ENCODE measurements at regions of chr11 and their contacts with region 1.

Region 1: GRCh38 chr11:95790123-95790932 is at the start of gene CEP57:
- DNase-seq: peak; percentile 98
- H3K4me3 Mint-ChIP-seq: peak within 1 kb of the TSS; percentile 99
- H3K27ac Mint-ChIP-seq: peak within 1 kb of the TSS; percentile 100
- H3K4me1 Mint-ChIP-seq: peaks cover 56% of the 10 kb centered on the region
- H3K27me3 Mint-ChIP-seq: no peaks in the 10 kb centered on the region
- total RNA-seq, gene CEP57: 110 to 115 TPM

Region 2: DNA sequence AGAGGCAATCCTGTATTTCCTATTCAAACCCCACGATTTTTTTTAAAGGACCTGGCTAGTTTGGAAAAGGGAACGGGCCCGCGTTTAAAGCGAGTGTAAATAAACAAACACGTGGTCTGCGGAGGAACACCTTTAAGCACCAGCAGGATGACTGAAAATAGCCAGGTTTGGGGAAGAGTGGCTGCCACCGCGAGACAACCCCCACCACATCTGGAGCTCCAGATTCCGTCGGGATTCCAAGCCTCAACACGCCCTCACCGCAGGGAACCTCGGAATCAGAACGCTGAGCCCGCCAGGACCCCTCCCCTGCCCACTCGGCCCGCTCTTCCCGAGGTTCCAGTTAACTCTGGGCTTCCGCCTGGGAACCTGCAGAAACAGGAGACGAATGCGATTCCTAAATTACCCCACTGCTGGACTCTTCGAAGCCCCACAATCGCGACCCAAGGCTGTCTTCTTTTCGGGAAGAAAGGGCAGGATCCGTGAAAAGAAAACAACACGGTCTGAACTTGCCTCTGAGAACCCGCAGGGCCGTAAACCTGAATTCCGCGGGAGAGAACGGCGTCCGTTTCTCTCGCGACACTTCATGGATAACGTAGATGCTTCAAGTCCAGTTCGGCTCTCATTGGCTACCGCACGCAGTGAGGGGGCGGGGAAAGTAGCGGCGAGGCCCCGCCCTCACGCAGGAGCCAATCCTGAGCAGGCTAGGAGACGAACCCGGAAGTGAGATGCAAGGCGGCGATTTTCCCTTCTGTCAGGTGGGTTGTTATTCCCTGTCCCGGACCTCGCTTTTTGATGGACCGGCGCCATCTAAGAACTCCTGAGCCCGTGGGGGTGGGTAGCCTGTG is 1296.8 kb before region 1 on chr11 and contains the starts of genes ANKRD49 and MRE11:
- CTCF ChIA-PET with region 1: no interaction called
- intact Hi-C with region 1: loop called (anchors 5 kb)
- DNase-seq: peak; percentile 97
- H3K4me3 Mint-ChIP-seq: peak within 1 kb of the TSS; percentile 93
- H3K27ac Mint-ChIP-seq: peak within 1 kb of the TSS; percentile 95
- H3K4me1 Mint-ChIP-seq: peaks cover 25% of the 10 kb centered on the region
- H3K27me3 Mint-ChIP-seq: no peaks in the 10 kb centered on the region
- total RNA-seq, gene ANKRD49: 16.3 to 19.1 TPM
- total RNA-seq, gene MRE11: 33.1 to 37.3 TPM

Region 3: GRCh38 chr11:94543695-94544645 is 1246.4 kb before region 1 on chr11 and contains the start of gene FUT4:
- CTCF ChIA-PET with region 1: no interaction called
- intact Hi-C with region 1: loop called (anchors 2 kb)
- DNase-seq: peak; percentile 80
- H3K4me3 Mint-ChIP-seq: peak within 1 kb of the TSS; percentile 100
- H3K27ac Mint-ChIP-seq: peak within 1 kb of the TSS; percentile 98
- H3K4me1 Mint-ChIP-seq: peaks cover 32% of the 10 kb centered on the region
- H3K27me3 Mint-ChIP-seq: no peaks in the 10 kb centered on the region
- total RNA-seq, gene FUT4: 2.8 to 2.9 TPM

Region 4: GRCh38 chr11:95254131-95254704 is 536.1 kb before region 1 on chr11:
- CTCF ChIA-PET with region 1: no interaction called
- intact Hi-C with region 1: loop called (anchors 1 kb)
- DNase-seq: peak; percentile 95
- H3K4me3 Mint-ChIP-seq: peak overlapping the region; percentile 83
- H3K27ac Mint-ChIP-seq: peak overlapping the region; percentile 92
- H3K4me1 Mint-ChIP-seq: peaks cover 47% of the 10 kb centered on the region
- H3K27me3 Mint-ChIP-seq: no peaks in the 10 kb centered on the region

Region 5: DNA sequence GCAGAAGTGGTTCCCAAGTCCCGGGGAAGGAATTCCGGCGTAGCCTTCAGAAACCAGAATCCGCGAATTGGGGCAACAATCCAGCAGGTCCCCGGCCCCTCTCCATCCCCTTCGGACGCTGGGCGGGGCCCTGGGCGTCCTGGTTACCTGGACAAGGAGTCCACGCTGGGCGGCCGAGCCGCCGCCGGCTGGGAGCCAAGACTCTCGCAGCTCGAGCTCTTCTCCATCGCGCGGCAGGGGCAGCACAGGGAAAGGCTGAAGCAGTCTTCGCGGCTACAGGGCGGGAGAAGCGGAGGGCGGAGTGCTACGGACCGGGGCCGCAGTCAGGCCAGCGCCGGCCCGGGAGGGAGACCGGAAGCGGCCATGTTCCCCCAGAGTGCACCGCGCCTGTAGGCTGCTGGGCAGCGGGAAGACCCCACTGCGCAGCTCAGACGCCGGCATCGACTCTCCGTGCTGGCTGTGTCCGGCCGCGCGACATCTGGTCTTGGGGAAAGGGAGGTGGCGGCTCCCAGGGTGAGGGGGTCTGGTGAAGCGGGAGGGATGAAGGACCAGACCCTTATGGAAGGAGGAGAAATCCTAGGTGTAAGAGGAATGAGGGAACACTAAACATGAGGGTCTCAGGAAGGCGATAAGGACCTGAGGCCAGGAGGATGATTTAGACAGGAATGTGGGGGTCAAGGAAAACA is 133.5 kb after region 1 on chr11 and contains the start of gene MTMR2:
- CTCF ChIA-PET with region 1: no interaction called
- intact Hi-C with region 1: loop called (anchors 1 kb)
- DNase-seq: peak; percentile 62
- H3K4me3 Mint-ChIP-seq: peak within 1 kb of the TSS; percentile 94
- H3K27ac Mint-ChIP-seq: peak within 1 kb of the TSS; percentile 95
- H3K4me1 Mint-ChIP-seq: peaks cover 28% of the 10 kb centered on the region
- H3K27me3 Mint-ChIP-seq: no peaks in the 10 kb centered on the region
- total RNA-seq, gene MTMR2: 32.5 to 34.6 TPM

Region 6: DNA sequence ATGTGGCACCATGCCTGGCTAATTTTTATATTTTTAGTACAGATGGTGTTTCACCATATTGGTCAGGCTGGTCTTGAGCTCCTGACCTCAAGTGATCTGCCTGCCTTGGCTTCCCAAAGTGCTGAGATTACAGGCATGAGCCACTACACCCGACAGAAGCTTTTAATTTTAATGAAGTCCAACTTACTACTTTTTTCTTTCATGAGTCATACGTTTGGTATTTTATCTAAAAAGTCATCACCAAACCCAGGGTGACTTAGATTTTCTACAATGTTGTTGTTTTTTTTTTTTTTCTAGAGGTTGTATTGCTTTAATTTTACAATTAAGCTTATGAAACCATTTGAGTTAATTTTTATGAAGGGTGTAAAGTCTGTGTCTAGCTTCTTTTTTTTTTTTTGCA is 634.4 kb after region 1 on chr11:
- CTCF ChIA-PET with region 1: interaction called, 5 read pairs
- intact Hi-C with region 1: loop called (anchors 1 kb)
- DNase-seq: no peak
- H3K4me3 Mint-ChIP-seq: no peak overlapping the region
- H3K27ac Mint-ChIP-seq: no peak overlapping the region
- H3K4me1 Mint-ChIP-seq: peaks cover 4% of the 10 kb centered on the region
- H3K27me3 Mint-ChIP-seq: peaks cover 17% of the 10 kb centered on the region

Measured in activated naive CD4-positive, alpha-beta T cell treated with anti-CD3 and anti-CD28 coated beads for 36 hours (primary cell).